AG04450 (cell line): ENCODE measurements at regions of chr12 and their contacts with region 1.

Region 1: DNA sequence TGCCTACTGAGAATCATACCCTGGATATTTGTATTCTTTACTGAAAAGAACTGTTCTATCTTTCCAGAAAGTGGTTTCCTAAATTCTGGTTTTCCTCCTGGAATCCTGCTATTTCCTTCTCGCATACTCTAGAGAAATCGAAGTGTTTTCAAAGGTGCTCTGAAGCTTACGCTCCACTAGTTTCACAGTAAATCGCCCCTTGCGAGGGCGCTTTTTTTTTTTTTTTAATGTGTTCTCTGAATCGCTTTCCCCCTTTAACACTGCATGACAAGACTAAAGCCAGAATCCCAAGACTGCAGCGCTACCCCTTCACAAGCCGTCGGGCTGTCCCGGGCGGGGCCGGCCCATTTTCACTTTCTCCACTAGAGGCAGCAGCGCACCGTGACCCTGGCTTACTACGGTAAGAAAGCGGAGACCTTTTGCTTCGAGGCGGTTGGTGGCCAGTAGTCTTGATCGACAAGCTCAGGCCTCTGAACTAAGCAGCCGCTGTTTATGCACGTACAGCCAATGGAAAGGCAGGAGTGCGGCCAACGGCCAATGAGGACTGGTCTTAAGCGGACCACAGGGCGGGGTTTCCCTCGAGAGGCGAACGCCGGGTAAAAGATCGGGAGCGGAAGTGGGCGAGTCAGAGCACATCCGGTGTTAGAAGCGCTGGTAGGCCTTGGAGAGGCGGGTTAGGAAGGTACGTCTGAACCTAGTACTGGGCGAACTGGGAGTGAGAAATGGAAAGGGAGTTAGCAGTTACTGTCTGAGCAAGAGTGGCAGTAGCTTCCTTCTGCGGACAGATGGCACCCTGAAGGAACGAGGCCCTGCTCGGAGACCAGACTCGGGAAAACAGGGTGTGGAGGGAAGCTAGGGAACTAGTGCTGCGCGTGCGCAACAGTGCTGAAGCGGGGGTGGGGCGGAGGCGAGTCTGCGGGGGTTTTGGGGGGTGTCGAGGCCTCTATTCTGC is at the start of gene TMBIM6:
- DNase-seq: peak; percentile 100
- H3K4me3 ChIP-seq: peak within 1 kb of the TSS; percentile 100
- H3K27ac ChIP-seq: peak within 1 kb of the TSS; percentile 97
- H3K27me3 ChIP-seq: no peaks in the 10 kb centered on the region
- CTCF ChIP-seq: peak; percentile 96
- polyA plus RNA-seq, gene TMBIM6: 711 and 906 TPM in 2 replicates

Region 2: GRCh38 chr12:49636979-49637755 is 104.0 kb before region 1 on chr12:
- CTCF ChIA-PET with region 1: interaction called, 22 read pairs
- POLR2A ChIA-PET with region 1: interaction called, 17 read pairs
- DNase-seq: peak; percentile 39
- H3K4me3 ChIP-seq: no peak overlapping the region
- H3K27ac ChIP-seq: peak overlapping the region; percentile 47
- H3K27me3 ChIP-seq: no peaks in the 10 kb centered on the region
- CTCF ChIP-seq: peak; percentile 86

Region 3: DNA sequence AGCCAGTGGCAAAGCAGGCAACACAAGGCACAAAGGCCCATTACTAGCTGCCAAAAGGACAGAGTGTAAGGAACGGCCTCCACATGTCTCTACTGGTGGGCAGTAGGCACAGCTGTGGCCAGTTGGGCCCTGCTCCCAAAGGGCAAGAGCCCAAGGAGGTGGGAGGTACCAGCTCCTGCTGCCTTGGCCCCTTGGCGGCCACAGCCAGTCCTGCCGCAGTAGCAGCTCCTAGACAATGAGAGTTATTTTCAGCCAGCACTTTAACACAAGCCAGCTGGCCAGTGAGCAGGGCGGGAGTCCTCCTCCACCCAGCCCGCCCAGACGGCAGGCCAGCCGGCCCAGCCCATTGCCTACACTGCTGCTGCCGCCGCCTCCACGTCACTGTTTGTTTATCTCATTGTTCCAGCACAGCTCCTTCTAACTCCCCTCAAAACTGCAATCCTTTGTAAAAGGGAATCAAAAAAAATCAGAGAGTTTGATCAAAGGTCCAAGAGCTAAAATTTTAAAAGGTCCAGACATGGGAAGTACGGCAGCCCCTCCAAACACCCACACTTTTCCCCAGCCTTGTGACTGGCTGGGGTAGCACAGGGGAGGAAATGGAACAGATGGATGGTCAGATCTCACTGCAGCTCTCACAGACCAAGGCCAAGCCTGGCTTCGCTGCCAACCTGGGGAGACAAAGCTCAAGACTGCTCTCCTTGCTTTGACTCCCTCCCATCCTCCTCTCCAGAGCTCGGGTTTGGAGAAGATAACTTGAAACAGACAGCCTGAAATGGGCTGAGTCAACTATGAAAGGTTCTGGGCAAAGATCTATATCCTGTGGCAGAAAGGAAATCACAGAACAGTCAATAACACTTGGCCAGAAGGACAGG is 67.5 kb before region 1 on chr12:
- CTCF ChIA-PET with region 1: interaction called, 13 read pairs
- POLR2A ChIA-PET with region 1: interaction called, 11 read pairs
- DNase-seq: peak; percentile 88
- H3K4me3 ChIP-seq: peak overlapping the region; percentile 34
- H3K27ac ChIP-seq: peak overlapping the region; percentile 99
- H3K27me3 ChIP-seq: no peaks in the 10 kb centered on the region
- CTCF ChIP-seq: peak; percentile 46

Region 4: GRCh38 chr12:49730568-49731101 is 10.6 kb before region 1 on chr12:
- CTCF ChIA-PET with region 1: interaction called, 12 read pairs
- POLR2A ChIA-PET with region 1: interaction called, 4 read pairs
- DNase-seq: no peak
- H3K4me3 ChIP-seq: no peak overlapping the region
- H3K27ac ChIP-seq: no peak overlapping the region
- H3K27me3 ChIP-seq: peaks cover 17% of the 10 kb centered on the region
- CTCF ChIP-seq: no peak

Region 5: GRCh38 chr12:49828133-49829091 is 87.2 kb after region 1 on chr12 and contains the start of gene NCKAP5L:
- CTCF ChIA-PET with region 1: interaction called, 3 read pairs
- POLR2A ChIA-PET with region 1: interaction called, 14 read pairs
- DNase-seq: peak; percentile 96
- H3K4me3 ChIP-seq: peak within 1 kb of the TSS; percentile 86
- H3K27ac ChIP-seq: peak within 1 kb of the TSS; percentile 90
- H3K27me3 ChIP-seq: no peaks in the 10 kb centered on the region
- CTCF ChIP-seq: no peak
- polyA plus RNA-seq, gene NCKAP5L: 5.6 and 7.3 TPM in 2 replicates